ENCODE measurements at regions of chr14 and their contacts with region 1.

Region 1: DNA sequence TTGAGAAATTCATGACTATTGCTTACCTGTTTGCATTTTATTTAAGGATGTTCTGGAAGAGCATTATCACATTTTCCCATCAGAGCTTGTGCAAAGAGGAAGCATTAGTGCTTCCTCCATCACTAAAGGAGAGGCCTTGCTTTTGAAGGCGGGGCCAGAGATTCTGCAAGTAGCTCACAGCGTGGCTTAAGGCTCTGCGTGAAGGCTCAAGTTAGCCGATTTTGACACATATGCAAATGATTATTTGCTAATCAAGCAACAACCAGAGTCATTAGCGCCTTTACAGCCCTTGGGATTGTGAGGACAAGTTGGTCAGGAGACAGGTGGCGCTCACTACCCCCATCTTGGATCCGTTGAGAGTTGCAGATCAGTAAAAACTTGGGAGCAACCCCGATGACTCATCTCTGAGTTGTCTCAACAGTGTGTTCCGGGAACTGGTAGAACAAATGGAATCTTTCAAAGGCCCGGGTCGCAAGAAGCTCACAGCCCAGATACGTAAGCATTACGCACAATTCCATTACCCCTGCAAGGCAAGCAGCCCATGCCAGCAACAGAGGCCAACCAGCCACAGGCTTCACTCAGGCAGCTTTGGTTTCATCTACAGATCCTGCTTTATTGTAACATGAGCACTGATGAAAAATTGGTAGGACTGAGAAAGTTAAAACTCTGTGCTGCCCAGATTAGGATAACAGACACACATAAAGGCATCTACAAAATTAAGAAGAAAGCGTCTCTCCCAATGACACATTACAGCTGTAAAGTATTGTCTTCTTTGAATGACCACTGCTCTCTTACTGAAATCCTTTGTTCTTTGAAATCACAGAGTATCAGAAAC is 34.9 kb upstream of the SPTSSA start:
- DNase-seq: no peak
- CTCF ChIP-seq: no peak

Region 2: GRCh38 chr14:33611405-33612209 is 885.3 kb before region 1 on chr14:
- in situ Hi-C with region 1: no loop called
- DNase-seq: no peak
- CTCF ChIP-seq: no peak

Region 3: GRCh38 chr14:34331728-34332623 is 164.9 kb before region 1 on chr14:
- in situ Hi-C with region 1: loop called (anchors 10 kb)
- DNase-seq: peak; percentile 59
- CTCF ChIP-seq: peak; percentile 70